ENCODE measurements at regions of chr13 and their contacts with region 1.

Region 1: GRCh38 chr13:113387396-113387795 is 23.5 kb upstream of the GRTP1 start:
- DNase-seq: no peak
- H3K4me3 ChIP-seq: no peak overlapping the region
- H3K27ac ChIP-seq: no peak overlapping the region
- H3K4me1 ChIP-seq: no peaks in the 10 kb centered on the region
- H3K27me3 ChIP-seq: no peaks in the 10 kb centered on the region
- CTCF ChIP-seq: no peak

Region 2: DNA sequence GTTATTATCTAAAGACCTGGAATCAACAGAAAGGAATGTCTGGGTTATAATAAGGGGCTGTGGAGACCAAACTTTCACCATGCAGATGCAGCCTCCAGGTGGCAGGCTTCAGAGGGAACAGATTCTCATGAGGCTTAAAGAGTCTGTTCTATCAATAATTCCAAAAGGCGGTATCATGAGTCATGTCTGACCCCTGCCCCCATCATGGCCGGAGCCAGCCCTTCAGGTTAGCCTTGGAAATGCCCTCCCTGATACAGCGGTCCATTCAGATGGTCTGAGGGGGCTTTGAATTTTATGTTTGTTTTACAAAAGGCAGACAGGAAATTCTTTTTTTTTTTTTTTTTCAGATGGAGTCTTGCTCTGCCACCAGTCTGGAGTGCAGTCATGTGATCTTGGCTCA is 112.0 kb before region 1 on chr13:
- intact Hi-C with region 1: loop called (anchors 5 kb)
- DNase-seq: no peak
- H3K4me3 ChIP-seq: no peak overlapping the region
- H3K27ac ChIP-seq: no peak overlapping the region
- H3K4me1 ChIP-seq: peaks cover 0 to 7% (median 0%) of the 10 kb centered on the region in 4 donors
- H3K27me3 ChIP-seq: peaks cover 0 to 3% of the 10 kb centered on the region in 2 donors
- CTCF ChIP-seq: peak; percentile 46

Region 3: GRCh38 chr13:113490496-113491417 is 103.4 kb after region 1 on chr13 and contains the start of gene DCUN1D2:
- intact Hi-C with region 1: no loop called
- DNase-seq: peak; percentile 92 to 97
- H3K4me3 ChIP-seq: peak within 1 kb of the TSS; percentile 89 to 95
- H3K27ac ChIP-seq: peak within 1 kb of the TSS; percentile 92 to 94
- H3K4me1 ChIP-seq: peaks cover 0 to 64% (median 55%) of the 10 kb centered on the region in 4 donors
- H3K27me3 ChIP-seq: no peaks in the 10 kb centered on the region
- CTCF ChIP-seq: no peak